Activated naive CD4-positive, alpha-beta T cell treated with anti-CD3 and anti-CD28 coated beads for 36 hours (primary cell): ENCODE measurements at regions of chr9 and their contacts with region 1.

Region 1: GRCh38 chr9:5909976-5910375 is 19.3 kb downstream of the MLANA start:
- DNase-seq: no peak
- H3K4me3 Mint-ChIP-seq: peak overlapping the region; percentile 32
- H3K27ac Mint-ChIP-seq: peak overlapping the region; percentile 89
- H3K4me1 Mint-ChIP-seq: peaks cover 29% of the 10 kb centered on the region
- H3K27me3 Mint-ChIP-seq: no peaks in the 10 kb centered on the region

Region 2: GRCh38 chr9:5764130-5764868 is 145.7 kb before region 1 on chr9:
- CTCF ChIA-PET with region 1: no interaction called
- intact Hi-C with region 1: loop called (anchors 1 kb)
- DNase-seq: peak; percentile 55
- H3K4me3 Mint-ChIP-seq: no peak overlapping the region
- H3K27ac Mint-ChIP-seq: peak overlapping the region; percentile 83
- H3K4me1 Mint-ChIP-seq: peaks cover 72% of the 10 kb centered on the region
- H3K27me3 Mint-ChIP-seq: no peaks in the 10 kb centered on the region

Region 3: DNA sequence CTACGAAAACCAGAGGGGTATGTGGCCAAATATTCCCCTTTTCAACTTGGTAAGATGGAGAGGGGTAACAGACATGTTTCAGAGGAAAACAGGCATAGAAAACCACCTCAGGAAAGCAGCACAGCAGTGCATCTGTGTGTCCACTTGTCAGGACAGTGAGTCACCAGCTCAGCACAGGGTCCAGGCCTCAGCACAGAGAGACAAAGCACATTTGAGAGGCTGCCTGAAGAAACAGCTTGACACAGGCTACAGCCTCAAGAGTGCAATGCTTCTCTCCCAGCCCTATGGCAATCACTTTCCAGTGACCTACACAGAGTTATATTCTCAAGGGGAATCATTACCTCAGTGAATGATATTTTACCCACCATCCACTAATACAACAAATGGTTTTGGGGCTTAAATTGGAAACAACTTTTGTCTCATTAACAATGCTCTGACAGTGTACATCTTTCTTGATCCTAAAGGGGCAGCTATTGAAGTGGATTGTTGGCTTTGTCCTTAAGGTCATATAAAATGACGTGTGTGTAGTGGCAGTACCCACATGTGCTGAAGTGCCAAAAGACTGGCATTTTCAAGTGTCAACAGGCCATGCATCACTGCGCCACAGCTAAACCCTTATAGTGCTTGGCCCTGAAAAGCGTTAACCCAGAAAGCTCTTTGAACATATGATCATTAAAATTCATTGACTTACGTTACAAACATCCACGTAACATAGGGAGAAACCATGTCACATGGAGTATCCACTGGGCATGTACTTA is 123.4 kb before region 1 on chr9:
- CTCF ChIA-PET with region 1: no interaction called
- intact Hi-C with region 1: no loop called
- DNase-seq: no peak
- H3K4me3 Mint-ChIP-seq: no peak overlapping the region
- H3K27ac Mint-ChIP-seq: peak overlapping the region; percentile 75
- H3K4me1 Mint-ChIP-seq: peaks cover 41% of the 10 kb centered on the region
- H3K27me3 Mint-ChIP-seq: no peaks in the 10 kb centered on the region

Region 4: GRCh38 chr9:5851445-5851844 is 58.5 kb before region 1 on chr9:
- CTCF ChIA-PET with region 1: no interaction called
- intact Hi-C with region 1: loop called (anchors 1 kb)
- DNase-seq: peak; percentile 73
- H3K4me3 Mint-ChIP-seq: no peak overlapping the region
- H3K27ac Mint-ChIP-seq: peak overlapping the region; percentile 26
- H3K4me1 Mint-ChIP-seq: peaks cover 41% of the 10 kb centered on the region
- H3K27me3 Mint-ChIP-seq: no peaks in the 10 kb centered on the region

Region 5: DNA sequence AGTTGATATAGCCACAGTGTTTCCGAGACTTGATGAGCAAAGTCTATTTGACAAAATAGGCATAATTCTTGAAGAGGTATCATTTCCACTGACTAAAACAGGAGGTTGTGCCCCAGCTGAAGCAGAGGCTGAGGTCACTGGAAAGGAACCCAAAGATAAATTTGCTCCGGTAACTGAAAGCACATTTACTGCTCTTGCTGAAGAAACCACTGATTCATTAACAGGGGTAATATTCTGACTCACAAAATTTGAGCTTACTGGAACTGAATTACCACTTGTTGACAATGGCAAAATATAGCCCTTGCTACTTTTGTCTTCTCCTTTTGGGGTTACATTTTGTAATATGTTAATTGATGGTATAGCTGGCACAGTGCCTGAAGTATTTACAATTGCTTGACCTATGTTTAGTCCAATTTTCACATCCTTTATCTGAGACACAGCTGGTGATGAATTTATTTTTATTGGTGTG is 10.9 kb after region 1 on chr9:
- CTCF ChIA-PET with region 1: no interaction called
- intact Hi-C with region 1: loop called (anchors 1 kb)
- DNase-seq: peak; percentile 48
- H3K4me3 Mint-ChIP-seq: no peak overlapping the region
- H3K27ac Mint-ChIP-seq: peak overlapping the region; percentile 81
- H3K4me1 Mint-ChIP-seq: peaks cover 28% of the 10 kb centered on the region
- H3K27me3 Mint-ChIP-seq: no peaks in the 10 kb centered on the region

Region 6: GRCh38 chr9:6015278-6016157 is 105.5 kb after region 1 on chr9 and contains the start of gene RANBP6:
- CTCF ChIA-PET with region 1: no interaction called
- intact Hi-C with region 1: loop called (anchors 1 kb)
- DNase-seq: peak; percentile 95
- H3K4me3 Mint-ChIP-seq: peak within 1 kb of the TSS; percentile 98
- H3K27ac Mint-ChIP-seq: peak within 1 kb of the TSS; percentile 99
- H3K4me1 Mint-ChIP-seq: peaks cover 42% of the 10 kb centered on the region
- H3K27me3 Mint-ChIP-seq: no peaks in the 10 kb centered on the region
- total RNA-seq, gene RANBP6: 19.0 to 19.5 TPM